Sigmoid colon (tissue), 7 donors: ENCODE measurements at regions of chr16 and their contacts with region 1.

Region 1: GRCh38 chr16:1019231-1020090 is 37.9 kb downstream of the SOX8 start:
- DNase-seq: no peak
- H3K4me3 ChIP-seq: peak overlapping the region in 3 of 4 donors; percentile 2 to 21 (median 12)
- H3K27ac ChIP-seq: peak overlapping the region; percentile 19 to 34 (median 24)
- H3K4me1 ChIP-seq: no peaks in the 10 kb centered on the region
- H3K27me3 ChIP-seq: peaks cover 9 to 51% (median 29%) of the 10 kb centered on the region in 3 donors
- CTCF ChIP-seq: no peak
- EP300 ChIP-seq: no peak
- POLR2A ChIP-seq: no peak

Region 2: DNA sequence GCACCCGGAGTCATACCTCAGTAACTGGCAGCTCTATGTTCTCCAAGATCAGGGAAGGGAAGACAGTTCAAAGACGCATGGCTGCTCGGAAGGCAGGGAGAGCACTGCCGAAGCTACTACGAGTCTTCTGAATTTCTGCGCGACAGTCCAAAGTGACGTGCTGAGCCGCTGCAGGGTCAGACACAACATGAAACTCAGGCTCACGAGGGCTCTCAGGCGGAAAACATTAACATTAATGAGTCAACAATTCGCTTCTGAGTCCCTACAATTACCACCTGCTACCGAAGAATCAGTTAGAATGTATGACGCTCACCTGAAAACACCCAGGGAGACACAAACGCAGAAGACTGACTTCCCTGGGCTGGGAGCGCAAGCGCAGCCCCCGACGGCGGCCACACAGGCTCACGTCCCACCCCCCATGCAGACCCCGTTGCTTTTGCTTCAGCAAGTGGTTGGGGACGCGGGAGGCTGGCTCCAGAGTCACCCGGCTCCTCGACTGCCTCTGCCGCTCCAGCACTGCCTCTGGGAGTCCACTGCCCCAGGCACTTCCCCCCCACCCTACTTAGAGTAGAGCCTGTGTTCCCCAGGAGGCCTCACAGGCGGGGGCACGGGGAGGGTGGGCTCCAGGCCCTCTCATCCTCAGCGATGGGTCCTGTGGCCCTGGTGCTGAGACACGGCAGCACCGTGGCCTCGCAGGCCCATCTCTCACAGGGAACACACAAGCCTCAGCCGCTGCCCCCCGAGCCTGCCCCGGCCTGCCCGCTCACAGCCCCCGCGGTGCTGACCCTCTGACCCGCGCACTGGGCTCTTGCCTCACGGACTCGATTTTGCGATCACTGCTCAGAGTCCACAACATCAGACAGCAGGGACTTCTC is 87.6 kb before region 1 on chr16:
- intact Hi-C with region 1: loop called (anchors 10 kb)
- DNase-seq: no peak
- H3K4me3 ChIP-seq: no peak overlapping the region
- H3K27ac ChIP-seq: no peak overlapping the region
- H3K4me1 ChIP-seq: no peaks in the 10 kb centered on the region
- H3K27me3 ChIP-seq: no peaks in the 10 kb centered on the region
- CTCF ChIP-seq: no peak
- EP300 ChIP-seq: no peak
- POLR2A ChIP-seq: no peak

Region 3: DNA sequence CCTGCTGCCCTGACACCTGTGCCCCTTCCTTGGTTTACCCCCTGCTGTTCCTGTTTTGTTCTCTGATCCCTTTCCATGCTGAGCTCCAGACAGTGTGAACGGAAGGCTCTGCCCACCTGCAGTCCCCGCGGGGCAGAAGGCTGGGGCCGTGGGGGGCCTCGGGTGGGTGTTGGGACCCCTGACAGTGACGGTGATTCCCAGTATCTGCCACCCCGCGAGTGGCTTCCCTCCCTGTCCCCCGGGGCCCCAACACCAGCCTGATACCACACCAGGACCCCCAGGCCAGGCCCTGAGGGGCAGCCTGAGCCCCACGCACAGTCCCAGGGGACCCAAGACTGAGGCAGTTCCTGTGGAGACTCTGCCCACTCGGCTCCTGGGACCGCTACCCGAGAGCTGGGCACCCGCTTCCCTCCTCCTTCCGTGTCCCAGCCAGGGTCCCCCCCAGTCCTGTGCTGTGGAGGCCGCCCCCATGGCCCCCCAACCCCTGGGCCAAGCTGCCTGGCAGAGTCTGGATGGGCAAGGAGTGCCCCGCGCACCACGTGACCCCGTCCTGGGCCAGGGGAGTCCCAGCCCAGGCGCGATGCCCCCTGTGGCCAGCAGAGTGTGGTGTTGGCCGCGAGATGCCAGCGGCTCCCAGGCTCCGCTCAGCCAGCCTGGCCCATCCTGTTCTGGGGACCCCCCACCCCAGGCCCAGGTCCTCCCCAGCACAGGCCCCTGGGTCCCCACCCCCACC is 86.6 kb after region 1 on chr16:
- intact Hi-C with region 1: no loop called
- DNase-seq: peak; percentile 86
- H3K4me3 ChIP-seq: no peak overlapping the region
- H3K27ac ChIP-seq: no peak overlapping the region
- H3K4me1 ChIP-seq: peaks cover 0 to 23% (median 19%) of the 10 kb centered on the region in 4 donors
- H3K27me3 ChIP-seq: peaks cover 13 to 51% (median 26%) of the 10 kb centered on the region in 3 donors
- CTCF ChIP-seq: peak; percentile 58 to 92 (median 76)
- EP300 ChIP-seq: no peak
- POLR2A ChIP-seq: no peak